ENCODE measurements at regions of chr4 and their contacts with region 1.

Region 1: GRCh38 chr4:44927399-44928380 is 201.3 kb upstream of the GNPDA2 start:
- DNase-seq: peak; percentile 3
- H3K4me3 Mint-ChIP-seq: no peak overlapping the region
- H3K27ac Mint-ChIP-seq: no peak overlapping the region
- H3K4me1 Mint-ChIP-seq: no peaks in the 10 kb centered on the region
- H3K27me3 Mint-ChIP-seq: no peaks in the 10 kb centered on the region
- CTCF ChIP-seq: peak; percentile 13

Region 2: GRCh38 chr4:44760142-44760898 is 167.4 kb before region 1 on chr4:
- CTCF ChIA-PET with region 1: no interaction called
- intact Hi-C with region 1: loop called (anchors 10 kb)
- DNase-seq: peak; percentile 9
- H3K4me3 Mint-ChIP-seq: no peak overlapping the region
- H3K27ac Mint-ChIP-seq: no peak overlapping the region
- H3K4me1 Mint-ChIP-seq: no peaks in the 10 kb centered on the region
- H3K27me3 Mint-ChIP-seq: no peaks in the 10 kb centered on the region
- CTCF ChIP-seq: peak; percentile 24

Region 3: GRCh38 chr4:45131020-45131419 is 203.3 kb after region 1 on chr4:
- CTCF ChIA-PET with region 1: no interaction called
- intact Hi-C with region 1: no loop called
- DNase-seq: no peak
- H3K4me3 Mint-ChIP-seq: no peak overlapping the region
- H3K27ac Mint-ChIP-seq: no peak overlapping the region
- H3K4me1 Mint-ChIP-seq: no peaks in the 10 kb centered on the region
- H3K27me3 Mint-ChIP-seq: no peaks in the 10 kb centered on the region
- CTCF ChIP-seq: no peak

Region 4: GRCh38 chr4:45442466-45442865 is 514.8 kb after region 1 on chr4:
- CTCF ChIA-PET with region 1: no interaction called
- intact Hi-C with region 1: loop called (anchors 2 kb)
- DNase-seq: no peak
- H3K4me3 Mint-ChIP-seq: no peak overlapping the region
- H3K27ac Mint-ChIP-seq: no peak overlapping the region
- H3K4me1 Mint-ChIP-seq: no peaks in the 10 kb centered on the region
- H3K27me3 Mint-ChIP-seq: no peaks in the 10 kb centered on the region
- CTCF ChIP-seq: peak; percentile 18

Measured in Calu3 (cell line).